Activated CD4-positive, alpha-beta memory T cell treated with anti-CD3 and anti-CD28 coated beads, Interleukin-2, amount 10 ng/mL, durations not matched to agents 7 days and 5 days (primary cell): ENCODE measurements at regions of chr21 and their contacts with region 1.

Region 1: DNA sequence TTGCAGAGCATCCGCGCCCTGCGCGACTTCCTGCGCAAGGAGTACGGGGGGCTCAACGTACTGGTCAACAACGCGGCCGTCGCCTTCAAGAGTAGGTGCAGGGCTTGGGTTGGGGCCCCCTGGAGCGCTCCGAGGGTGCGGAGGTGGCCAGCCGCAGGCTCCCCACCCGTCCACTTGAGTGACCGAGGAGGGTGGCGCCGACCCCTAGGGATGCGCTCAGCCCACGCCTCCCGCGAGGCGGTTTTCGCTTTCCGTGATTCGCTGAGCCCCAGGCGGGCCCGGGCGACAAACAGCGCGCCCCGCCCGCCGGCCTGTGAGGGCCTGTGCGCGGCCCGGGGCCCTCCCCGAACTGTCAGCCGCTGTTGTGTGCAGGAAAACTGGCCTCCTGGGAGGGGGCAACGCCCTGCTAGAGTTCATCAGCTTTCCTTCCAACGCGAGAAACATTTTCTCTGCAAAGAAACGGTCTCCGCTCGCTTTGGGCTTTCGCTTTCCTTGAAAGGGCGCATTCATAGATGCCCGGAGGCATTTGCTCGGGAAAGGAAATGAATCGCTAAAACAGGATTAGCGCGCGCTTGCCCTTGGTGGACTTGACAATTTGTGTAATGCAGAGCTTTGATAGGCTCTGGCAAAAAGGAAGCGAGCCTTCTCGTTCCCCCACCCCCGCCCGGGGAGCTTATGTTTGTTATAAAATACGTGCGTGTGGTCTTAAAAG is 668 bp downstream of the CBR3 start:
- DNase-seq: peak; percentile 80
- H3K4me3 Mint-ChIP-seq: peak overlapping the region; percentile 80
- H3K27ac Mint-ChIP-seq: peak overlapping the region; percentile 91
- H3K4me1 Mint-ChIP-seq: peaks cover 45% of the 10 kb centered on the region
- H3K27me3 Mint-ChIP-seq: no peaks in the 10 kb centered on the region

Region 2: GRCh38 chr21:35989138-35989735 is 146.3 kb before region 1 on chr21:
- CTCF ChIA-PET with region 1: no interaction called
- POLR2A ChIA-PET with region 1: no interaction called
- DNase-seq: no peak
- H3K4me3 Mint-ChIP-seq: no peak overlapping the region
- H3K27ac Mint-ChIP-seq: no peak overlapping the region
- H3K4me1 Mint-ChIP-seq: no peaks in the 10 kb centered on the region
- H3K27me3 Mint-ChIP-seq: peaks cover 15% of the 10 kb centered on the region

Region 3: GRCh38 chr21:36069713-36070573 is 65.6 kb before region 1 on chr21 and contains the start of gene CBR1:
- CTCF ChIA-PET with region 1: interaction called, 3 read pairs
- POLR2A ChIA-PET with region 1: interaction called, 12 read pairs
- DNase-seq: peak; percentile 92
- H3K4me3 Mint-ChIP-seq: peak within 1 kb of the TSS; percentile 84
- H3K27ac Mint-ChIP-seq: peak within 1 kb of the TSS; percentile 80
- H3K4me1 Mint-ChIP-seq: peaks cover 56% of the 10 kb centered on the region
- H3K27me3 Mint-ChIP-seq: peaks cover 5% of the 10 kb centered on the region
- total RNA-seq, gene CBR1: 42.0 to 44.1 TPM

Region 4: DNA sequence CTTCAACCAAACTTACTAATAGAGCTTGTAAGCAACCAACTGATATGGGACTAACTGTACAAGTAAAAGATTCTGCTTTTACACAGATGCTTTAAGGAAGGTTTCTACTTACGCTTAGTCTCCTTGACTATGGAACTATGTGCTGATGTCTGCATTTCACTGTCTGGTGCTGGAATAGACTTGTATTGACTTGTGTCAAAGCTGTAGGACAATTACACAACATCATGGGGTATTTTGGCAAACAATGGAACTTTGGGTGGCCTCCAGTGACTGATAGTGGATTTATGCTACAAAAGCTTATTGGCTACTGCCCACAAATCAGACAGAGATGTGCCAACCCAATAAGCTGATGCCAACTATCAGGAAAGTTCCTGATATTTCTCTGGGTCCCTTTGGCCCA is 55.2 kb before region 1 on chr21:
- CTCF ChIA-PET with region 1: no interaction called
- POLR2A ChIA-PET with region 1: no interaction called
- DNase-seq: no peak
- H3K4me3 Mint-ChIP-seq: no peak overlapping the region
- H3K27ac Mint-ChIP-seq: peak overlapping the region; percentile 98
- H3K4me1 Mint-ChIP-seq: peaks cover 43% of the 10 kb centered on the region
- H3K27me3 Mint-ChIP-seq: no peaks in the 10 kb centered on the region

Region 5: DNA sequence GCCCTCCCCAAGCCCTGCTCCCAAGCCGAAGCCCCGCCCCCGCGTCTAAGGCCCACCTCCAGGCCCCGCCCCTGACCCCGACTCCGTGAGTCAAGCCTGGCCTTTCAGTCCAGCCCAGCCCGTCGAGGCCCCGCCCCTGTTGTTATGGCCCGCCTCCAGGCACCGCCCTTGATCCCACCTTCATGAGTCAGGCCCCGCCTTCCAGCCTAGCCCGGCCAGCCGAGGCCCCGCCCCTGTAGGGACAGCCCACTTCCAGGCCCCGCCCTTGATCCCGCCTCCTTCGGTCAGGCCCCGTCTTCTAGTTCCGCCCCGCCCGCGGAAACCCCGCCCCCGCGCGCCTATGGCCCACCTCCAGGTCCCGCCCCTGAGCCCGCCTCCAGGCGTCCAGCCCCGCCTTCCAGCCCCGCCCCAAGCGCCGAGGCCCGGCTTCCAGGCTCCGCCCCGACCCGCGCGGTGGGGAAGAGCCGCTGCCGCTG is 20.8 kb after region 1 on chr21:
- CTCF ChIA-PET with region 1: interaction called, 27 read pairs
- POLR2A ChIA-PET with region 1: interaction called, 22 read pairs
- DNase-seq: peak; percentile 100
- H3K4me3 Mint-ChIP-seq: peak overlapping the region; percentile 80
- H3K27ac Mint-ChIP-seq: peak overlapping the region; percentile 31
- H3K4me1 Mint-ChIP-seq: peaks cover 41% of the 10 kb centered on the region
- H3K27me3 Mint-ChIP-seq: peaks cover 6% of the 10 kb centered on the region

Region 6: DNA sequence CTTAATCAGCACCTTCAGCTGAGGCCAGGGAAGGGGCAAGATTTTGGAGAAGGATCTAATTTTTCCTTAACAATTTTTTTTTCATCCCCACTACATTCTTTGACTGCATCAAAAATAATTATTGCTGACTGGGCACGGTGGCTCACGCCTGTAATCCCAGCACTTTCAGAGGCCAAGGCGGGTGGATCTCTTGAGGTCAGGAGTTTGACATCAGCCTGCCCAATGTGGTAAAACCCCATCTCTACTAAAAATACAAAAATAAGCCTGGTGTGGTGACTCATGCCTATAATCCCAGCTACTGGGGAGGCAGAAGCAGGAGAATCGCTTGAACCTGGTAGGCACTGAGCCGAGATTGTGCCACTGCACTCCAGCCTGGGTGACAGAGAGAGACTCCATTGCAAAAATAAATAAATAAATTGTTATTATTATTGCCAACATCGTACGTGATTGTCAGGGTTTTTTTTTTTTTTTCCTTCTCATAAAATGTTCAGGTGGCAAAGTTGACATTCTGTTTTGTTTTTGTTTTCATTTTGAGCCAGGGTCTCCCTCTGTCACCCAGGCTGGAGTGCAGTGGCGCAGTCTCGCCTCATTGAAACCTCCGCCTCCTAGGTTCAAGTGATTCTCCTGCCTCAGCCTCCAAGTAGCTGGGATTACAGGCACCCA is 147.2 kb after region 1 on chr21:
- CTCF ChIA-PET with region 1: no interaction called
- POLR2A ChIA-PET with region 1: no interaction called
- DNase-seq: no peak
- H3K4me3 Mint-ChIP-seq: no peak overlapping the region
- H3K27ac Mint-ChIP-seq: no peak overlapping the region
- H3K4me1 Mint-ChIP-seq: peaks cover 6% of the 10 kb centered on the region
- H3K27me3 Mint-ChIP-seq: no peaks in the 10 kb centered on the region

Region 7: DNA sequence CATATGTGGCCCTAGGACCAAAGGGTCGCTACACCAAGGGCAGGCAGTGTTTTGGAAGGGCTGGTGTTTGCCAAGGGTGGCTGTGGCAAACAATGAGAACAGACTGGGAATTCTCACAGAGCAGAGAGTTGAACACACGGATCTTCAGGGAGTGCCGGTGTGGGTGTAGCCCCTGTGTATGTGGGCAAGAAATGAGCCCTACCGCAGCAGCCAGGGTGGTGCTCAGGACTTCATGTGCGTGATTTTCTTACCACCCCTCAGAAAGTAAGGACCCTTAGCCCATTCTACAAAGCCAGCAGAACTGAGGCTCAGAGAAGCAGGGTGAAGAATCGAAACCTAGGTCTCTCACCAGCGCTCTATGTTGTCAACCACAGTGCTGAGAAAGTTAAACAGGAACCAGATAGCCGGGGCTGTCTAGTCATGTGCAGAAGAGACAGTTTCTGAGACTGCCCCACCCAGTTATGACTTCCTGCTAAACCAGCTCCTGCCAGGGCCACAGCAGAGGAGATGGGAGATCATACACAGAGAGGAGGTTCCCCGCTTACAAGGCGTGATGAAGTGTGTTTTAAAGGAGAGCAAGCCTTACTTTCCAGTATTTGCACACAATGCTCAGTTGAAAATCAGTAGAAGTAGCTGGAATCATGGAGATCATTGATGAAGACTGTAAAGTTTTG is 162.5 kb after region 1 on chr21:
- CTCF ChIA-PET with region 1: no interaction called
- POLR2A ChIA-PET with region 1: interaction called, 11 read pairs
- DNase-seq: peak; percentile 83
- H3K4me3 Mint-ChIP-seq: peak overlapping the region; percentile 76
- H3K27ac Mint-ChIP-seq: peak overlapping the region; percentile 93
- H3K4me1 Mint-ChIP-seq: peaks cover 50% of the 10 kb centered on the region
- H3K27me3 Mint-ChIP-seq: no peaks in the 10 kb centered on the region